ENCODE measurements at regions of chr18 and their contacts with region 1.

Region 1: GRCh38 chr18:67217551-67218166 is 298.9 kb downstream of the DSEL start:
- DNase-seq: peak; percentile 26
- H3K4me3 Mint-ChIP-seq: no peak overlapping the region
- H3K27ac Mint-ChIP-seq: no peak overlapping the region
- H3K4me1 Mint-ChIP-seq: no peaks in the 10 kb centered on the region
- H3K27me3 Mint-ChIP-seq: no peaks in the 10 kb centered on the region

Region 2: GRCh38 chr18:67515945-67516538 is 298.4 kb after region 1 on chr18:
- intact Hi-C with region 1: loop called (anchors 5 kb)
- DNase-seq: peak; percentile 14
- H3K4me3 Mint-ChIP-seq: peak overlapping the region; percentile 81
- H3K27ac Mint-ChIP-seq: no peak overlapping the region
- H3K4me1 Mint-ChIP-seq: peaks cover 17% of the 10 kb centered on the region
- H3K27me3 Mint-ChIP-seq: peaks cover 49% of the 10 kb centered on the region

Region 3: DNA sequence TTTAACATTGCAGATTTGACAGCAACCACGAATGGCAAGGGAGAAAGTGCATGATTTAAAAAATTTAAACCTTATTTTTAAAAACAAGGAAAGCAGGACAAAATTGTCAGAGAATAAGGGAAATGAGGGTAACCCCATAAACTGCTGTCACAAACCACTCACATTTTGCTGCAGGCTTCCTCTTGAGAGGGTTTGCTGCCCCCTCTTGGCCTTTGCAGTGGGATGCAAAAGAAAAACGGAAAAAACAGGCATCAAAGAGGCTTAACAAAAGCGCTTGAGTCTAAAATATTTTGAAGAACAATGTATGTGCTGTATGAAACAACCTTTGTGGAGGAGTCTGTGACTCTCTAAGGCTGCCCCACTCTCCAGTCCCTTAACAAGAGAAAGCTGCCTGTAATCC is 1405.7 kb after region 1 on chr18:
- intact Hi-C with region 1: loop called (anchors 1 kb)
- DNase-seq: no peak
- H3K4me3 Mint-ChIP-seq: no peak overlapping the region
- H3K27ac Mint-ChIP-seq: no peak overlapping the region
- H3K4me1 Mint-ChIP-seq: no peaks in the 10 kb centered on the region
- H3K27me3 Mint-ChIP-seq: no peaks in the 10 kb centered on the region

Region 4: GRCh38 chr18:68660354-68661183 is 1442.9 kb after region 1 on chr18:
- intact Hi-C with region 1: loop called (anchors 1 kb)
- DNase-seq: no peak
- H3K4me3 Mint-ChIP-seq: no peak overlapping the region
- H3K27ac Mint-ChIP-seq: no peak overlapping the region
- H3K4me1 Mint-ChIP-seq: no peaks in the 10 kb centered on the region
- H3K27me3 Mint-ChIP-seq: peaks cover 2% of the 10 kb centered on the region

Region 5: GRCh38 chr18:68735483-68736343 is 1518.1 kb after region 1 on chr18:
- intact Hi-C with region 1: loop called (anchors 1 kb)
- DNase-seq: no peak
- H3K4me3 Mint-ChIP-seq: no peak overlapping the region
- H3K27ac Mint-ChIP-seq: no peak overlapping the region
- H3K4me1 Mint-ChIP-seq: no peaks in the 10 kb centered on the region
- H3K27me3 Mint-ChIP-seq: no peaks in the 10 kb centered on the region

Region 6: GRCh38 chr18:68847219-68847837 is 1629.7 kb after region 1 on chr18:
- intact Hi-C with region 1: loop called (anchors 10 kb)
- DNase-seq: no peak
- H3K4me3 Mint-ChIP-seq: no peak overlapping the region
- H3K27ac Mint-ChIP-seq: no peak overlapping the region
- H3K4me1 Mint-ChIP-seq: no peaks in the 10 kb centered on the region
- H3K27me3 Mint-ChIP-seq: no peaks in the 10 kb centered on the region